ENCODE measurements at regions of chr15 and their contacts with region 1.

Region 1: GRCh38 chr15:89496155-89497098 is at the start of gene RHCG:
- DNase-seq: peak; percentile 84
- ATAC-seq: peak; percentile 91
- H3K4me3 Mint-ChIP-seq: peak within 1 kb of the TSS; percentile 67
- H3K27ac Mint-ChIP-seq: no peak within 1 kb of the TSS
- H3K4me1 Mint-ChIP-seq: 0 out of 2 replicates have a peak, but pooled peaks cover 3% of the 10 kb centered on the region
- H3K27me3 Mint-ChIP-seq: peaks cover 38% of the 10 kb centered on the region
- CTCF ChIP-seq: no peak
- total RNA-seq, gene RHCG: 0.23 to 0.37 TPM (median 0.31 TPM) in 3 replicates

Region 2: GRCh38 chr15:89321521-89322410 is 174.7 kb before region 1 on chr15:
- CTCF ChIA-PET with region 1: no interaction called
- POLR2A ChIA-PET with region 1: no interaction called
- DNase-seq: no peak
- ATAC-seq: peak; percentile 68
- H3K4me3 Mint-ChIP-seq: no peak overlapping the region
- H3K27ac Mint-ChIP-seq: no peak overlapping the region
- H3K4me1 Mint-ChIP-seq: no peaks in the 10 kb centered on the region
- H3K27me3 Mint-ChIP-seq: no peaks in the 10 kb centered on the region
- CTCF ChIP-seq: no peak

Region 3: GRCh38 chr15:89367485-89368451 is 128.7 kb before region 1 on chr15:
- CTCF ChIA-PET with region 1: interaction called, 12 read pairs
- POLR2A ChIA-PET with region 1: no interaction called
- DNase-seq: peak; percentile 87
- ATAC-seq: peak; percentile 42
- H3K4me3 Mint-ChIP-seq: peak overlapping the region; percentile 61
- H3K27ac Mint-ChIP-seq: no peak overlapping the region
- H3K4me1 Mint-ChIP-seq: peaks cover 29% of the 10 kb centered on the region
- H3K27me3 Mint-ChIP-seq: peaks cover 99% of the 10 kb centered on the region
- CTCF ChIP-seq: no peak

Region 4: DNA sequence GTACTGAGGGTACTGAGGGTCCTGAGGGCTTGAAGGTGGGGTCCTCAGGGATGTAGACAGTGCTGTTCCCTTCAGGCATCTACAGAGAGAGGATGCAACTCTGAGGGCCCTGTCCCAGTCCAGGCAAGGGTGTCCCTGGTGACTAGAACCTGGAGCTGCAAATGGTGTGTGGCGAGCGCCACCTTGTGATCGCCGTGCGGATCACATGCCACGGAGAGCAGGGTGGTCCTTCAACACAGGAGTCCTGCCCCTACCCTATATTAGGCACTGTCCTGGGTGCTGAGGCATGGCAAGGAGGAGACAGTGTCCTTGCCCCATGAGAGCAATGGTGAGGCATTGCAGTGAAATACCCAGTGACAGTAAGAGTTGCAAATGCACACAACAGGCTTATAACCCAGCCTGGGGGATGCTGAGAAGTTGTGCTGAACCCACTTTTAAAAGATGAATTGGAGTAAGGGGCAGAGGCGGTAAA is 23.6 kb before region 1 on chr15:
- CTCF ChIA-PET with region 1: interaction called, 18 read pairs
- POLR2A ChIA-PET with region 1: no interaction called
- DNase-seq: peak; percentile 95
- ATAC-seq: peak; percentile 92
- H3K4me3 Mint-ChIP-seq: no peak overlapping the region
- H3K27ac Mint-ChIP-seq: no peak overlapping the region
- H3K4me1 Mint-ChIP-seq: peaks cover 26% of the 10 kb centered on the region
- H3K27me3 Mint-ChIP-seq: peaks cover 30% of the 10 kb centered on the region
- CTCF ChIP-seq: peak; percentile 86

Region 5: GRCh38 chr15:89556413-89557262 is 60.2 kb after region 1 on chr15:
- CTCF ChIA-PET with region 1: interaction called, 21 read pairs
- POLR2A ChIA-PET with region 1: no interaction called
- DNase-seq: peak; percentile 63
- ATAC-seq: peak; percentile 82
- H3K4me3 Mint-ChIP-seq: no peak overlapping the region
- H3K27ac Mint-ChIP-seq: no peak overlapping the region; the same call in 1 of the 2 replicates
- H3K4me1 Mint-ChIP-seq: peaks cover 3% of the 10 kb centered on the region; the same call in 1 of the 2 replicates
- H3K27me3 Mint-ChIP-seq: peaks cover 4% of the 10 kb centered on the region; the same call in 1 of the 2 replicates
- CTCF ChIP-seq: 0 out of 2 replicates have a peak, but pooled peaks have one; percentile 50

Region 6: GRCh38 chr15:89575146-89575655 is 78.8 kb after region 1 on chr15 and contains the start of gene TICRR:
- CTCF ChIA-PET with region 1: interaction called, 22 read pairs
- POLR2A ChIA-PET with region 1: interaction called, 5 read pairs
- DNase-seq: peak; percentile 96
- ATAC-seq: peak; percentile 94
- H3K4me3 Mint-ChIP-seq: peak within 1 kb of the TSS; percentile 96
- H3K27ac Mint-ChIP-seq: peak within 1 kb of the TSS; percentile 90
- H3K4me1 Mint-ChIP-seq: peaks cover 24% of the 10 kb centered on the region
- H3K27me3 Mint-ChIP-seq: no peaks in the 10 kb centered on the region
- CTCF ChIP-seq: no peak
- total RNA-seq, gene TICRR: 33.7 to 37.4 TPM (median 33.8 TPM) in 3 replicates

Region 7: DNA sequence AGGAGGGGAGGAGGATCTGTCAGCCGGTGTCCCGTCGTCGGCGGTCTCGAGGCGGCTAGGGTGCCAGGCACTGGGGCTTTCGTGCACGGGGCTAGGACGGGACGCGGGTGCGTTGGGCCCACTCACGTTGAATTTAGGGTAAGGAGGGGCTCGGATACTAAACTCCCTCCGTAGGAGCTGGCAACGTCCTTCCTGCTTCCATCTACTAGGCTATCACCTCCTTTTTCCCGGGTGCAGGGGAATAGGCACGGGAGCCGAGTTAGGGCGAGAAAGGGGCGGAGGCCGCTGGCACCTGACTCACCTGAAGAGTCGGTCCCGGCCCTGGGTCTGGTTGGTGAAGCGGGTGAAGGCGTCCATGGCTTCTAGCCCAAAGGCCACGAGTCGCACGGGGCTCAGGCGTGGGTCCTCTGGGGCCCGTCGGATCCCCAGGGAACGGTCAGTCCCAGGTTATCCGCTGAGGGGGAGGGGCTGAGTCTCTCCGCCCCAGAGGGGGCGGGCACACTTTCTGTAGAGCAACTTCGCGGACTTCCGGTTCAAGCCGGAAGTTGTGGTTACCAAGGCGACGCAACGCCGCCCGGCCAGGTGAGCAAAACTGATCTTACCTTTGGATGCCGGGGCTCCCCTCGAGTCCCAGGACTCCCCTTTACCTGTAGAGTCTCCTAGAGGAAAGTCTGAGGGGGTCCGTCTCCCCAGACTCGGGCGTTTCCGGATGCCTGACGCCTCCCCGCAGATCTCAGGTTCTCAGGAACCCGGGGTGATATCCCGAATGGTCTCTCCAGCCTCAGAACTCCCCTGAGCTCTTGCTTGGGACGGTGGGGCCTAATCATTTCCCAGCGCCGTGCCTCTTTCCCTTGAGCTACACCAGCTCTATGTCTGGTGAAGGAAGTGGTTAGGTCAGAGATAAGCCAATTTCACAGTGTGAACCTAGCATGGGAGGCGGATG is 194.1 kb after region 1 on chr15 and contains the starts of genes PEX11A and WDR93:
- CTCF ChIA-PET with region 1: no interaction called
- POLR2A ChIA-PET with region 1: no interaction called
- DNase-seq: peak; percentile 91
- ATAC-seq: peak; percentile 98
- H3K4me3 Mint-ChIP-seq: peak within 1 kb of the TSS; percentile 85
- H3K27ac Mint-ChIP-seq: no peak within 1 kb of the TSS
- H3K4me1 Mint-ChIP-seq: peaks cover 4% of the 10 kb centered on the region; the same call in 1 of the 2 replicates
- H3K27me3 Mint-ChIP-seq: peaks cover 33% of the 10 kb centered on the region
- CTCF ChIP-seq: no peak
- total RNA-seq, gene PEX11A: 2.9 to 3.5 TPM (median 3.0 TPM) in 3 replicates
- total RNA-seq, gene WDR93: 0.09 TPM in 1 of 3 replicates, not detected in the others

Measured in WTC11 (cell line).